ENCODE measurements at regions of chr17 and their contacts with region 1.

Region 1: DNA sequence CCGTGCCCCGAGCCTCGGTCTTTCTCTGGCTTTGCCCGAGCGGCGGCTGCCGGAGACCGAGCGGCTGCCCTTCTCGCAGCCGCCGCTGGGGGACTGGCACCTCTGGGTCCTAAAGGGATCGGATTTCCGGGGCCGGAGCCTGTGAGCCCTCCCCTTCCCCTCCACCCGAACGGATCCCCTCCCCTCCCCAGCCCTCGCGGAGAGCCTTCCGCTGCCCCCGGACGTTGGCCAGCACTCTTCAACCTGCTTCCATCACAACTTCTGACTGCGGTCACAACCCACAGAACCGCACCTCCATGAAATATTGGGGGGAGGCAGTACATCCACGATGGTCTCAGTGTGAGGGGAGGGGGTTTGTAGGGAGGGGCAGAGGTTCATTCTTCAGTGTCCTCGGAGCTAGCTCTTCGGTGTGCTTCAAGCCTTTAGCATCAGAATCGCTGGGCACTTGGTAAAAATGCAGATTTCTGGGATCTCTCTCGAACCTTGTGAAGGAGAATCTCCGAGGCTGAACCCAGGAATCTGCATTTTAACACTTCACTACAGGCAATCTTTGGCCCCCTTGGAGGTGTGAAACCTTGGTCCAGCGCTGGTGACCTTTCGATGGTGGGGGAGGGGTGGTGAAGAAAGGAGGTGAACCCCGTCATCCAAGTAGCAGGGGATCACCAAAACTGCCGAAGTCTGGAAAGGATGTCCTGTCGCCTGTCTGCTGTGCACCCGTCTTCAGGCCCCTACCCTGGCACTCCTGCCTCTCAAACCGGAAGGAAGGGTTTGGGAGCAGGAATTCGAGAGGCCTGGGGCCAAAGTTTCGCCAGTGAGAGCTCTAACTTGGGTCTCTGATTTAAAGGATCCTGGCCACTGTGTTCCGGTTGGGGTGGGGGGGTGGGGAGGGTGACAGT is 812 bp upstream of the PPP1R9B start:
- DNase-seq: peak; percentile 92
- ATAC-seq: peak; percentile 58
- H3K4me3 Mint-ChIP-seq: peak overlapping the region; percentile 75
- H3K27ac Mint-ChIP-seq: peak overlapping the region; percentile 95
- H3K4me1 Mint-ChIP-seq: peaks cover 38% of the 10 kb centered on the region
- H3K27me3 Mint-ChIP-seq: peaks cover 19% of the 10 kb centered on the region
- CTCF ChIP-seq: no peak

Region 2: DNA sequence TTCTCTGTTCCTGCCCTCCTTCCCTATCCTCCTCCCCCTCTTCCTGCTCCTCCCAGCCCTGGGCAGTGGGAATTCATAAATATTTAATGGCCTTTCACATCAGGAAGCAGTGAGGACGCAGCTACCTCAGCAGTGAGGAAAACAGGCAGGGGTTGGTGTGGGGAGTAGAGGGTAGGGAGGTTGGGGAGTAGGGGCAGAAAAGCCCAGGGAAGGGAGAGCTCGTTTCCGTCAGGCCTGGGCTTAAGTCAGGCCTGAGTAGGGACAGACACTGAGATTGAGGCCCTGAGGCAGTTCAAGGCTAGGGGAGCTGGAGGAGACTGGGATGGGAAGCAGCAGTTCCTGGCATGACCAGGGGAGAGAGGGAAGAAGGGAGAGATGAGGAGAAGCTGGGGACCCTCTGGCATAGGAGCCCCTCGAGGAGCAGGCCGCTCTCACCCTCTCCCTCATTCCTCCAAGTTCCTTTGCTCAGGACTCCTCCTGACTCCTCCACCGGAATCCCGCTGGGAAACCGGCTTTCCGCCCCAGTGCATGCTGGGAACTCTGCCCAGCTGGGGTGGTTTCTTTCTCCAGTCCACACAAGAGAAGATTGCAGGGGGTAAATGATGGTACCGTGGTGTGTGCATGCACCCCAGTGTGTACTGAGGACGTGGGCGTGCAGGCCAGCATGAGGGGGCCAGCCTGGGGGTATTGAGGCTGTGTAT is 27.5 kb before region 1 on chr17:
- CTCF ChIA-PET with region 1: interaction called, 27 read pairs
- POLR2A ChIA-PET with region 1: no interaction called
- DNase-seq: no peak
- ATAC-seq: peak; percentile 70
- H3K4me3 Mint-ChIP-seq: peak overlapping the region; percentile 11; the same call in 1 of the 2 replicates
- H3K27ac Mint-ChIP-seq: peak overlapping the region; percentile 66
- H3K4me1 Mint-ChIP-seq: peaks cover 39% of the 10 kb centered on the region
- H3K27me3 Mint-ChIP-seq: peaks cover 38% of the 10 kb centered on the region
- CTCF ChIP-seq: no peak

Region 3: DNA sequence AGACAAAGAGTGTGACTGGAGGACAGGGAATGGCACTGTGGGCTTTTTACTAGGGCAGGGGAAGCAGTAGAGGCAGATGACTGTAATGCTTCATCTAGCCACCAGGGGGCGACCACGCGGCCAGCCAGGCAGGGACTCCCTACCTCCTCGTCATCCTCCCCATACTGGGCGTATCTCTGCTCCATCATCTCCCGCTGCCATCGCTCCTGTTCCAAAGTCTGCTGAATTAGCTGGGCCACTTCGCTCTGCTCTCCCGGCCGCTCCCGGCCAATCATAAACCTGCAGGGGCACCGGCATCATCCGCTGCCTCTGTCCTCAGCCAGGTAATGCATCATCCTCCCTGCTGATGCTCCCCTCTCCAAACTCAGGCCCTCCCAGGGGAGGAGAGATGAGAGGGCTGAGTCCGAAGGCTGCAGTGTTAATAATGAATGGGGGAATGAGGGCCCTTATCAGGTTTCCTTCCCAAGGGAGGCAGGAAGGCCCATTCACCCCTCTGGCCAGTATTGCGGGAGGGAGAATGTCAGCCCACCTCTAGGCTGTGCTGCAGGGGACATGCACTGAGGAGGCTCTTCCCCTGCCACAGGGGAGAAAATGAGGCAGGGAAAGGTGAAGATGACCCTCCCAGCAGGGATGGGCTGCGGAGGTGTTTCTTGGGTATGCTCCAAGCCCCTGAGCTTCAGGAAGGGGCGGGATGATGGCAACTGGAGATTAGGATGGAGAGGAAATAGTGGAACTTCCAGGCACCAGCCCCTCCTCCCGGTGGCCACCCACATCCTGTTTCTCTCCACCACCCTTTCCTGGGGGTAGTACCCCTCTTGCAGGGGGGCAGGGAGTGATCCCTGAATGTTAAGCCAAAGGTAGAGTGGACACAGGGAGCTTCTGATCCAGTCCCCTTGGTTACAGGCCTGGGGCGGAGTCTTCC is 11.1 kb before region 1 on chr17:
- CTCF ChIA-PET with region 1: interaction called, 52 read pairs
- POLR2A ChIA-PET with region 1: interaction called, 3 read pairs
- DNase-seq: peak; percentile 90
- ATAC-seq: peak; percentile 91
- H3K4me3 Mint-ChIP-seq: 0 out of 2 replicates have a peak overlapping the region, but pooled peaks have one; percentile 14
- H3K27ac Mint-ChIP-seq: no peak overlapping the region
- H3K4me1 Mint-ChIP-seq: peaks cover 14% of the 10 kb centered on the region
- H3K27me3 Mint-ChIP-seq: no peaks in the 10 kb centered on the region
- CTCF ChIP-seq: peak; percentile 99

Measured in WTC11 (cell line).